ENCODE measurements at regions of chr2 and their contacts with region 1.

Region 1: GRCh38 chr2:3575534-3576262 is 638 bp downstream of the RPS7 start:
- DNase-seq: peak in 1 of 2 donors; percentile 22
- ATAC-seq: peak; percentile 12 to 64 (median 26)
- H3K4me3 ChIP-seq: peak overlapping the region; percentile 72 to 95 (median 84)
- H3K27ac ChIP-seq: peak overlapping the region; percentile 70 to 94 (median 84)
- H3K4me1 ChIP-seq: peaks cover 3 to 45% (median 34%) of the 10 kb centered on the region in 9 donors
- H3K27me3 ChIP-seq: no peaks in the 10 kb centered on the region
- CTCF ChIP-seq: no peak

Region 2: DNA sequence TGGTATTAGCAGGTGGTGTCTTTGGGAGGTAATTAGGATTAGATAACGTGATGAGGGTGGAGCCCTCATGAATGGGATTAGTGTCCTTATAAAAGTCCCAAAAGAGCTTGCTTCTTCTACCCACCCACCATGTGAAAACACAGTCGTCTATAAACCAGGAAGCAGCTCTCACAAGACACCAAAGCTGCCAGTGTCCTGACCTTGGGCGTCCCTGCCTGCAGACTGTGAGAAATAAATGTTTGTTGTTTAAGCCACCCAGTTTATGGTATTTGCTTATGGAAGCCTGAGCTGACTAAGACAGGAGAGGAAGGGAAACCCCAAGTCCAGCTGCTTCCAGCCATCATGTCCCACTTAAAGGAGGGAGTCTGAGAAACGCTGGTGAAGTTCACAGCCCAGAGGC is 69.9 kb before region 1 on chr2:
- intact Hi-C with region 1: no loop called
- DNase-seq: no peak
- ATAC-seq: peak in 6 of 8 donors; percentile 33 to 75 (median 56)
- H3K4me3 ChIP-seq: no peak overlapping the region
- H3K27ac ChIP-seq: peak overlapping the region in 7 of 10 donors; percentile 3 to 65 (median 40)
- H3K4me1 ChIP-seq: peaks cover 0 to 21% (median 4%) of the 10 kb centered on the region in 9 donors
- H3K27me3 ChIP-seq: no peaks in the 10 kb centered on the region
- CTCF ChIP-seq: no peak

Region 3: GRCh38 chr2:3558205-3559014 is 17.3 kb before region 1 on chr2 and contains the start of gene RNASEH1:
- intact Hi-C with region 1: loop called in 4 of 10 experiments (anchors 1 to 2 kb)
- DNase-seq: peak; percentile 98 to 99
- ATAC-seq: peak; percentile 99 to 100 (median 100)
- H3K4me3 ChIP-seq: peak within 1 kb of the TSS; percentile 89 to 100 (median 94)
- H3K27ac ChIP-seq: peak within 1 kb of the TSS; percentile 73 to 97 (median 91)
- H3K4me1 ChIP-seq: peaks cover 0 to 21% (median 19%) of the 10 kb centered on the region in 9 donors
- H3K27me3 ChIP-seq: no peaks in the 10 kb centered on the region
- CTCF ChIP-seq: no peak
- total RNA-seq, gene RNASEH1: 17.3 to 24.0 (median 19.9) TPM

Region 4: DNA sequence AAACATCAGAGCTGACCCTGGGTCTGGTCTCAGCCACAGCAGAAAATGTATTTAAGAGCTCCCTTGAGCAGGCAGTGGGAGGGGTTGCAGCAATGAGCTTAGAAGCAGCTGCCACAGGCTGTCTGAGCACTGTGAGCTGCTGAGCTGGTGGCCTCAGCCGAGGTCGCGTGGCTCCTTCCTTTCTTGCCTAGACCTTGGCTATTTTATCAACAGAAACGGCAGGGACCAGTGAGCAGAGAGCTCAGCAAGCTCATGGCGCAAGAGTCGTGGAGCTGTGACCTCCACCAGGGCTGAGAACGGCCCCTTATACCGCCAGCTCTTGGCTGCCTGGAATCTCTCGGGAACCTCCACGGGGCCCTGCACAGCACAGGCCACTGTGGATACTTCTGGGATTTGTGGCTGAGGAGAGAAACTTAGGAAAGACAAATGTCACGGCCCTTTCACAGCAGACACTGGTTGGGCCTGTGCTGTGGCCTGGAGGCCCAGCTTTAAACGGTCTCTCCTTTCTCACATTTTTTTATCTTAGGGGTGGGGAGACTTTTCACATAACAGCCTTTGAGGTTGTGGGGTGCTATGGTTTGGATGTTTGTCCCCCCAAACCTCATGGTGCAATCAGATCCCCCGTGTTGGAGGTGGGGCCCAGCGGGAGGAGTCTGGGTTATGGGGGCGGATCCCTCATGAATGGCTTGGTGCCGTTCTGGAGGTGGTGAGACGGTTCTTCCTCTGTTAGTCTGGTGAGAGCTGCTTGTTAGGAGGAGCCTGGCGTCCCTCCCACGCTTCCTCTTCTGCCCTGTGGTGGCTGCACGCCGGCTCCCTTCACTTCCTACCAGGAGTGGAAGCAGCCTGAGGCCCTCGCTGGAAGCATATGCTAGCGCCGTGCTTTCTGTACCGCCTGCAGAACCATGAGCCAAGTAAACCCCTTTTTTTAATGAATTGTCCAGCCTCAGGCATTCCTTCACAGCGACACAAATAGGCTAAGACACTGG is 84.0 kb after region 1 on chr2:
- intact Hi-C with region 1: loop called in 4 of 10 experiments (anchors 5 to 10 kb)
- DNase-seq: peak; percentile 54 to 66
- ATAC-seq: peak; percentile 65 to 90 (median 80)
- H3K4me3 ChIP-seq: no peak overlapping the region
- H3K27ac ChIP-seq: peak overlapping the region; percentile 1 to 80 (median 53)
- H3K4me1 ChIP-seq: peaks cover 0 to 32% (median 12%) of the 10 kb centered on the region in 9 donors
- H3K27me3 ChIP-seq: no peaks in the 10 kb centered on the region
- CTCF ChIP-seq: no peak